Lower leg skin (tissue), 4 donors: ENCODE measurements at regions of chr10 and their contacts with region 1.

Region 1: GRCh38 chr10:9211228-9211627 is 1156.7 kb downstream of the GATA3 start:
- DNase-seq: no peak
- H3K4me3 ChIP-seq: no peak overlapping the region
- CTCF ChIP-seq: no peak
- POLR2A ChIP-seq: no peak

Region 2: GRCh38 chr10:7876541-7877127 is 1334.6 kb before region 1 on chr10:
- intact Hi-C with region 1: loop called (anchors 5 kb)
- DNase-seq: no peak
- H3K4me3 ChIP-seq: no peak overlapping the region
- CTCF ChIP-seq: no peak
- POLR2A ChIP-seq: no peak

Region 3: GRCh38 chr10:9188147-9188949 is 22.9 kb before region 1 on chr10:
- intact Hi-C with region 1: no loop called
- DNase-seq: no peak
- H3K4me3 ChIP-seq: no peak overlapping the region
- CTCF ChIP-seq: no peak
- POLR2A ChIP-seq: no peak